ENCODE measurements at regions of chr1 and their contacts with region 1.

Region 1: GRCh38 chr1:226940029-226940805 is at the start of gene COQ8A:
- DNase-seq: peak; percentile 99 to 100
- ATAC-seq: peak; percentile 73 to 74
- H3K4me3 ChIP-seq: peak within 1 kb of the TSS; percentile 84 to 95 (median 88)
- H3K27ac ChIP-seq: peak within 1 kb of the TSS; percentile 98 to 99 (median 99)
- H3K4me1 ChIP-seq: peaks cover 26 to 47% of the 10 kb centered on the region in 2 donors
- H3K27me3 ChIP-seq: no peaks in the 10 kb centered on the region
- CTCF ChIP-seq: peak in 1 of 5 experiments; percentile 0
- POLR2A ChIP-seq: peak; percentile 97 to 98
- total RNA-seq, gene COQ8A: 950 to 2,403 (median 1,384) TPM

Region 2: GRCh38 chr1:226662642-226663326 is 277.4 kb before region 1 on chr1:
- in situ Hi-C with region 1: no loop called
- intact Hi-C with region 1: loop called (anchors 10 kb)
- DNase-seq: peak; percentile 88 to 92
- ATAC-seq: peak; percentile 68 to 73
- H3K4me3 ChIP-seq: no peak overlapping the region
- H3K27ac ChIP-seq: no peak overlapping the region
- H3K4me1 ChIP-seq: peaks cover 94 to 99% of the 10 kb centered on the region in 2 donors
- H3K27me3 ChIP-seq: no peaks in the 10 kb centered on the region
- CTCF ChIP-seq: no peak
- POLR2A ChIP-seq: peak; percentile 60 to 66

Region 3: GRCh38 chr1:226920446-226920894 is 19.7 kb before region 1 on chr1:
- in situ Hi-C with region 1: no loop called
- intact Hi-C with region 1: loop called (anchors 2 kb)
- DNase-seq: peak; percentile 96 to 99
- ATAC-seq: peak; percentile 83 to 87
- H3K4me3 ChIP-seq: no peak overlapping the region
- H3K27ac ChIP-seq: peak overlapping the region; percentile 92 to 97 (median 94)
- H3K4me1 ChIP-seq: peaks cover 18 to 49% of the 10 kb centered on the region in 2 donors
- H3K27me3 ChIP-seq: no peaks in the 10 kb centered on the region
- CTCF ChIP-seq: peak in 1 of 5 experiments; percentile 16
- POLR2A ChIP-seq: peak; percentile 36 to 74

Region 4: DNA sequence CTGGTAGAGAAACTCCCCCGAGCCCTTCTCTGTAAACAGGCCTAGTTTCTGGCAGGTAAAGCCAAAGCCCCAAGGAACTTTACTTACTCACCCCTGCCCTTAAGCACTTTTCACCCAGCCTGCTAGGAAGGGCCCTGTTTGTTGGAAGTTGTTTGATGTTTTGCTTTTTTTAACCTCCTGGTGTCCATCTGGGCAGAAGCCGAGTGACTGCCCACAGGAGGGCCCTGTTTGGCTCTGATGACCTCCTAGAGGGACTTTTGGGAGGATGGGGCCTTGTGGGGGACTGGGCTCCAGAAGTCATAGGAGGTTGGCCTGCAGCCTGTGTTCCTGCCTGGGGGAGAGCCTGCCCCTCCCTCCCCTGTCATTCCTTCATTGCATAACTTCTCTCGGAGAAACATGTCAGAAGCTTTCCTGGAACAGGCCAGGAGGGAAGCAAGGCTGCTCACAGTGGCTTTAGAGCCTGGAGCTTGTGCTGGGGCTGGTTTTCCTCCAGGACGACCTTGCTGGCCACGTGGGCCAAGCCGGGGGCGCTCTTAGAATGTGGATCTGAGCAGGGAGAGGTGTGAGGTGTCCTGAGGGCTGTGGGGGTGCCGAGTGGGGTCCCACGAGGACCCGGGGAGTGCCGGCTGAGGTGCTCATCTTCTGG is 33.8 kb after region 1 on chr1:
- in situ Hi-C with region 1: no loop called
- intact Hi-C with region 1: loop called (anchors 2 kb)
- DNase-seq: peak; percentile 74 to 85
- ATAC-seq: peak; percentile 65 to 68
- H3K4me3 ChIP-seq: peak overlapping the region; percentile 29 to 45 (median 40)
- H3K27ac ChIP-seq: peak overlapping the region; percentile 99
- H3K4me1 ChIP-seq: peaks cover 82 to 84% of the 10 kb centered on the region in 2 donors
- H3K27me3 ChIP-seq: no peaks in the 10 kb centered on the region
- CTCF ChIP-seq: no peak
- POLR2A ChIP-seq: peak; percentile 20 to 33

Region 5: DNA sequence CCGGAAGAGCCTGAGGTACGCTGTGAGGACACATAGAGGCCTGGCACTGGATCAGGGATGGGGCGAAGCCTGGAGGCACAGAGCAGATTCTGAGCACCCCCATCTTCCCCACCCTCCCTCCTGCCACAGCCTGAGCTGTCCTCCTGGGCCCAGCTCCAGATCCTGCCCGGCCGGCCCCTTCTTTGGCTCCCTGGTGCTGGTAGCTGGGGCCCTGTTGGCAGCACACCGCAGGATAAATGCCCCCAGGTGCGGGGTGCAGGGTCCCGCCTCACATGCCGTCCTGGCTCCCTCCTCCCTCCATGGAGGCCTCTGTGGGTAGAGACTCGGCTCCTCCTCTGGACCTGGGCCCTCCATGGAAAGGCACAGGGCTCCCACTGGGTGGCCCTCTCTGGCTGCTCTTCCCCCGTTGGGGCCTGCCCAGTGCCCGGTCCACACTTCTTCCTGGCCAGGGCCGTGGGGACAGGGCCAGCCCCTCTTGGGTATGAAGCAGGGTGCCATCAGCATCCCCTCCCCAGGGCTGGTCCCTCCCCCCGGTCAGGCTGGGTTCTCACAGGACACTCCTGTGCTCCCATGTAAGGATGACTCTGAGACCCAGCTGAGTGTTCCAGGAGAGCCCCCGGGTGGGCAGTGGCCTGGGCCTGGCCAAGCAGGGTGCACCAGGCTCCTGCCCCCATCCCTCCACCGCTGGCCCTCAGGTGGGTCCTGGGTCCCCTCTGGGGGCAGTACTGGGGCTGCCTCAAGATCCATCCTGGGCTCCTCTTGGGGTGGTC is 1266.5 kb after region 1 on chr1:
- in situ Hi-C with region 1: no loop called
- intact Hi-C with region 1: loop called (anchors 10 kb)
- DNase-seq: peak in 1 of 2 donors; percentile 57
- ATAC-seq: no peak
- H3K4me3 ChIP-seq: no peak overlapping the region
- H3K27ac ChIP-seq: peak overlapping the region; percentile 97 to 100 (median 100)
- H3K4me1 ChIP-seq: peaks cover 35 to 40% of the 10 kb centered on the region in 2 donors
- H3K27me3 ChIP-seq: no peaks in the 10 kb centered on the region
- CTCF ChIP-seq: no peak
- POLR2A ChIP-seq: no peak

Measured in gastrocnemius medialis (tissue), 4 donors.